ENCODE measurements at regions of chr1 and their contacts with region 1.

Region 1: GRCh38 chr1:202571347-202572339 is 138.6 kb downstream of the SYT2 start:
- DNase-seq: peak; percentile 46
- ATAC-seq: no peak
- H3K4me3 ChIP-seq: no peak overlapping the region
- H3K27ac ChIP-seq: no peak overlapping the region
- H3K4me1 ChIP-seq: peaks cover 8% of the 10 kb centered on the region
- H3K27me3 ChIP-seq: no peaks in the 10 kb centered on the region
- CTCF ChIP-seq: peak; percentile 78

Region 2: GRCh38 chr1:202501281-202501680 is 70.4 kb before region 1 on chr1:
- CTCF ChIA-PET with region 1: no interaction called
- POLR2A ChIA-PET with region 1: no interaction called
- intact Hi-C with region 1: loop called (anchors 1 kb)
- DNase-seq: peak; percentile 52
- ATAC-seq: no peak; the same call in 1 of the 2 replicates
- H3K4me3 ChIP-seq: no peak overlapping the region
- H3K27ac ChIP-seq: no peak overlapping the region
- H3K4me1 ChIP-seq: no peaks in the 10 kb centered on the region
- H3K27me3 ChIP-seq: no peaks in the 10 kb centered on the region
- CTCF ChIP-seq: peak; percentile 47; the same call in 1 of the 2 replicates

Region 3: GRCh38 chr1:202589190-202590030 is 17.8 kb after region 1 on chr1:
- CTCF ChIA-PET with region 1: no interaction called
- POLR2A ChIA-PET with region 1: no interaction called
- intact Hi-C with region 1: no loop called
- DNase-seq: peak; percentile 91
- ATAC-seq: peak; percentile 91
- H3K4me3 ChIP-seq: no peak overlapping the region
- H3K27ac ChIP-seq: peak overlapping the region; percentile 87
- H3K4me1 ChIP-seq: peaks cover 48% of the 10 kb centered on the region
- H3K27me3 ChIP-seq: no peaks in the 10 kb centered on the region
- CTCF ChIP-seq: no peak

Measured in PC-3 (cell line).